Activated CD4-positive, alpha-beta memory T cell treated with anti-CD3 and anti-CD28 coated beads, Interleukin-2, amount 10 ng/mL, durations not matched to agents 7 days and 5 days (primary cell): ENCODE measurements at regions of chr1 and their contacts with region 1.

Region 1: GRCh38 chr1:21782868-21783678 is at the start of gene USP48:
- DNase-seq: peak; percentile 98
- H3K4me3 Mint-ChIP-seq: peak within 1 kb of the TSS; percentile 87
- H3K27ac Mint-ChIP-seq: peak within 1 kb of the TSS; percentile 100
- H3K4me1 Mint-ChIP-seq: peaks cover 30% of the 10 kb centered on the region
- H3K27me3 Mint-ChIP-seq: peaks cover 5% of the 10 kb centered on the region
- total RNA-seq, gene USP48: 80.1 to 81.8 TPM

Region 2: GRCh38 chr1:21703318-21703963 is 79.6 kb before region 1 on chr1:
- CTCF ChIA-PET with region 1: interaction called, 26 read pairs
- POLR2A ChIA-PET with region 1: interaction called, 22 read pairs
- DNase-seq: no peak
- H3K4me3 Mint-ChIP-seq: no peak overlapping the region
- H3K27ac Mint-ChIP-seq: no peak overlapping the region
- H3K4me1 Mint-ChIP-seq: peaks cover 23% of the 10 kb centered on the region
- H3K27me3 Mint-ChIP-seq: no peaks in the 10 kb centered on the region

Region 3: GRCh38 chr1:21766210-21766609 is 16.9 kb before region 1 on chr1:
- CTCF ChIA-PET with region 1: interaction called, 5 read pairs
- POLR2A ChIA-PET with region 1: interaction called, 34 read pairs
- DNase-seq: no peak
- H3K4me3 Mint-ChIP-seq: no peak overlapping the region
- H3K27ac Mint-ChIP-seq: no peak overlapping the region
- H3K4me1 Mint-ChIP-seq: peaks cover 60% of the 10 kb centered on the region
- H3K27me3 Mint-ChIP-seq: no peaks in the 10 kb centered on the region

Region 4: GRCh38 chr1:21867451-21867996 is 84.5 kb after region 1 on chr1:
- CTCF ChIA-PET with region 1: no interaction called
- POLR2A ChIA-PET with region 1: no interaction called
- DNase-seq: no peak
- H3K4me3 Mint-ChIP-seq: no peak overlapping the region
- H3K27ac Mint-ChIP-seq: no peak overlapping the region
- H3K4me1 Mint-ChIP-seq: no peaks in the 10 kb centered on the region
- H3K27me3 Mint-ChIP-seq: no peaks in the 10 kb centered on the region